CD4-positive, alpha-beta memory T cell (primary cell): ENCODE measurements at regions of chr3 and their contacts with region 1.

Region 1: DNA sequence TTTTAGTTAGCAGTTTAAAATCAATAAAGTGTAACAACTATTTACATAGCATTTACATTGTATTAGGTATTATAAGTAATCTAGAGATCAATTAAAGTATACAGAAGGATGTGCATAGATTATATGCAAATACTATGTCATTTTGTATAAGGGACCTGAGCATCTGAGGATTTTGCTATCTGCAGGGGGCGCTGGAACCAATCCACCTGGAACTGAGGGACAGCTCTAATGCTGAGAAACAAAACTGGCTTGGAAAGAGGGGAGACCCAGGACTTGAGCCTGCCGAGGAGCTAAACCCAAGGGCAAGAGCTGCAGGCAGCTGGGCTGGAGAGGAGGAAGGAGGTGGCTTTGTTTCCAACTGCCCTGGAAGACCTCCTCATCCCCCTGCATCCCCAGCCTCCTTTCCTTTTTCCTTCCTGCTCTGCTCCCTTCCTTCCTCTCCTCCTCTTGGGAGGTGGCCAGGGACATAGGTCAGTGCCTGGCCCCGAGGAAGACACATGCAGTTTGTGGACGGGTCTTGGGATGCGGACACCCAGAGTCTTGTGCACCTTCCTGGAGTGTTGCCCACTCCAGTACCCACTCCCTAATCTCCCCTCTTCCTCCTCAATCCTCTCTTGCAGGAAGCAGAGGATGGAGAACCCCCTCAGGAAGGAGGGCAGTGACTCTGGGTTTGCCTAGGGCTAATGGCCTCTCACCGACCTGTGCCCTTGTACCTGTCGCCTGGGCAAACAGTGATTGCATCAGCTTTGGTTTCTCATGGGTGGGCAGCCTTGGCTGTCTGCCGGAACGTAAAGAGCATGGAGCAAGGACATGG is 828 bp upstream of the RTP3 start:
- DNase-seq: peak in 4 of 5 donors; percentile 26 to 40 (median 30)
- H3K4me3 ChIP-seq: no peak overlapping the region
- H3K4me3 Mint-ChIP-seq: no peak overlapping the region
- H3K27ac ChIP-seq: no peak overlapping the region
- H3K27ac Mint-ChIP-seq: peak overlapping the region in 1 of 7 donors; percentile 84
- H3K4me1 ChIP-seq: peaks cover 10% of the 10 kb centered on the region
- H3K4me1 Mint-ChIP-seq: peaks cover 2 to 13% (median 5%) of the 10 kb centered on the region in 4 donors
- H3K27me3 ChIP-seq: no peaks in the 10 kb centered on the region
- H3K27me3 Mint-ChIP-seq: no peaks in the 10 kb centered on the region

Region 2: GRCh38 chr3:46508850-46509591 is 12.1 kb after region 1 on chr3:
- CTCF ChIA-PET with region 1: interaction called, 11 read pairs
- POLR2A ChIA-PET with region 1: no interaction called
- intact Hi-C with region 1: no loop called
- DNase-seq: no peak
- H3K4me3 ChIP-seq: no peak overlapping the region
- H3K4me3 Mint-ChIP-seq: no peak overlapping the region
- H3K27ac ChIP-seq: no peak overlapping the region
- H3K27ac Mint-ChIP-seq: no peak overlapping the region
- H3K4me1 ChIP-seq: no peaks in the 10 kb centered on the region
- H3K4me1 Mint-ChIP-seq: peaks cover 4 to 7% (median 6%) of the 10 kb centered on the region in 4 donors
- H3K27me3 ChIP-seq: no peaks in the 10 kb centered on the region
- H3K27me3 Mint-ChIP-seq: peaks cover 2 to 5% of the 10 kb centered on the region in 2 donors

Region 3: DNA sequence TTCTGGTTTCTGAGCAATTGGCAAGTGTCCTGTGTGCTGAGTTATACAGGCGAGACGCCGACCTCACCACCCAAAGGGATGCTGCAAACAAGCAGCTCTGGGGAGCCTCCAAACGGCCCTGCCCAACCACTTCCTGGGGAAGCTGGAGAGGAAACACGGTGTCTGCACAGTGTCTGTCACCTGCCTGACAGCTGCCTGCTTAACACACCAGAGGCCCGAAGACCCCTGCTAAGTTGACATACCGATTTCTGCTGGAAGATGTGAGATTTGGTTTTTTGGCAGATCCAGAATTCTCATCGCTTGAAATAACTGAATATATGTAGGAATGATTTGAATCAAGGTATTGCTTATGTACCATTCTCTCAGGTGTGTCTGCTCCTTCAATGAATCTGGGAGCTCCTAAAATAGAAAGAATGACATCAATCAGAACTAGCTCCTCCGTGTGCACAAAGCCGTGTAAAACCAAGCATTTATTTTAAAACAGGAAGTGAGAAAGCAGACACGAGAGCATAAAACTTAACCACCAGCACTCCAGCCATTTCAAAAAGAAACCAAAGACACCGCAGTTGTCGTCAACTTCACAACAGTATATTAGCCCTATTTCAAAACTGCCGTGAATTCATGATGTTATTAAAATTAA is 42.0 kb after region 1 on chr3:
- CTCF ChIA-PET with region 1: interaction called, 44 read pairs
- POLR2A ChIA-PET with region 1: interaction called, 11 read pairs
- intact Hi-C with region 1: no loop called
- DNase-seq: peak; percentile 83 to 95 (median 86)
- H3K4me3 ChIP-seq: peak overlapping the region; percentile 5 to 42
- H3K4me3 Mint-ChIP-seq: peak overlapping the region; percentile 65 to 85 (median 78)
- H3K27ac ChIP-seq: peak overlapping the region; percentile 51
- H3K27ac Mint-ChIP-seq: peak overlapping the region; percentile 88 to 97 (median 96)
- H3K4me1 ChIP-seq: peaks cover 52% of the 10 kb centered on the region
- H3K4me1 Mint-ChIP-seq: peaks cover 29 to 60% (median 46%) of the 10 kb centered on the region in 4 donors
- H3K27me3 ChIP-seq: no peaks in the 10 kb centered on the region
- H3K27me3 Mint-ChIP-seq: no peaks in the 10 kb centered on the region

Region 4: DNA sequence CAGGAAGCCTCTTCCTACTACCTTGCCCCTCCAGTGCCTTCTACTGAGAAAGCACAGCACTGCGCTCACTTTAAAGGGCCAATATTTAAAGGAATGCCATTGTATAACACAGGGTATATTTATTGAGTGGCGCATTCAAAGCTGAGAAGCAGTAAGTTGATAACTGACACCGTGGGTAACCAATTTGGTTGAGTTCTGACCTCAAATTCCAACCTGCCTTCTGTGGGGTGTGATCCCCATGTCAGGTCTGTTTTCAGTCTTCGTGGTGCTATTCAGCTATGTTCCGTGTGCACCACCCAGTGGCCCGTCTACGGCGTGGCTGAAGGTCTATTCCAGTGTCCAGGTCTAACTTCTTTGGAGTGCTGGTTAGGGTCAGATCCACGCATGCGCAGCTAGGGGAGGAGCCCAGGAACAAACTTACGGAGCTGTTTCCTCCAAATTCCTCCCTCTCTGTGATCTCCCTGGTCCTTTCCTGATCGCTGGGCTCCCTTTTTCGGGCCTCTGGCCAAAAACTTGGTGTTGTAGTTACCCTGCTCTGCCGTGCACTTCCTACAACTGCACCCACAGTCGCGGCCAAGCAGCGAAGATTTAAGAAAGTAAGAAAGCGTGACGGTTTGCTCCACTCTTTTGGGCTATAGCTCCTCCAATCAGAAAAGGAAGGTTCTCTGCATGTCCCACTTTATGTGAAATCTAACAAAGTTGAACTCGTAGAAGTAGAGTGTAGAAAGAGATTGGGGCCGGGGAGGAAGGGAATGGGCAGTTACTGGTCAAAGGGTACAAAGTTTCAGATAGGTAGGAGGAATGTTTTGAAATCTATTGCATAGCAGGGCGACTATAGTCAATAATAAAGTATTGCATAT is 61.5 kb after region 1 on chr3:
- CTCF ChIA-PET with region 1: interaction called, 331 read pairs
- POLR2A ChIA-PET with region 1: interaction called, 4 read pairs
- intact Hi-C with region 1: loop called (anchors 1 kb)
- DNase-seq: peak; percentile 68 to 74 (median 73)
- H3K4me3 ChIP-seq: peak overlapping the region in 1 of 2 donors; percentile 25
- H3K4me3 Mint-ChIP-seq: peak overlapping the region; percentile 76 to 87 (median 82)
- H3K27ac ChIP-seq: no peak overlapping the region
- H3K27ac Mint-ChIP-seq: peak overlapping the region in 6 of 7 donors; percentile 13 to 71 (median 36)
- H3K4me1 ChIP-seq: peaks cover 14% of the 10 kb centered on the region
- H3K4me1 Mint-ChIP-seq: peaks cover 10 to 17% (median 15%) of the 10 kb centered on the region in 4 donors
- H3K27me3 ChIP-seq: no peaks in the 10 kb centered on the region
- H3K27me3 Mint-ChIP-seq: peaks cover 1 to 4% of the 10 kb centered on the region in 2 donors

Region 5: DNA sequence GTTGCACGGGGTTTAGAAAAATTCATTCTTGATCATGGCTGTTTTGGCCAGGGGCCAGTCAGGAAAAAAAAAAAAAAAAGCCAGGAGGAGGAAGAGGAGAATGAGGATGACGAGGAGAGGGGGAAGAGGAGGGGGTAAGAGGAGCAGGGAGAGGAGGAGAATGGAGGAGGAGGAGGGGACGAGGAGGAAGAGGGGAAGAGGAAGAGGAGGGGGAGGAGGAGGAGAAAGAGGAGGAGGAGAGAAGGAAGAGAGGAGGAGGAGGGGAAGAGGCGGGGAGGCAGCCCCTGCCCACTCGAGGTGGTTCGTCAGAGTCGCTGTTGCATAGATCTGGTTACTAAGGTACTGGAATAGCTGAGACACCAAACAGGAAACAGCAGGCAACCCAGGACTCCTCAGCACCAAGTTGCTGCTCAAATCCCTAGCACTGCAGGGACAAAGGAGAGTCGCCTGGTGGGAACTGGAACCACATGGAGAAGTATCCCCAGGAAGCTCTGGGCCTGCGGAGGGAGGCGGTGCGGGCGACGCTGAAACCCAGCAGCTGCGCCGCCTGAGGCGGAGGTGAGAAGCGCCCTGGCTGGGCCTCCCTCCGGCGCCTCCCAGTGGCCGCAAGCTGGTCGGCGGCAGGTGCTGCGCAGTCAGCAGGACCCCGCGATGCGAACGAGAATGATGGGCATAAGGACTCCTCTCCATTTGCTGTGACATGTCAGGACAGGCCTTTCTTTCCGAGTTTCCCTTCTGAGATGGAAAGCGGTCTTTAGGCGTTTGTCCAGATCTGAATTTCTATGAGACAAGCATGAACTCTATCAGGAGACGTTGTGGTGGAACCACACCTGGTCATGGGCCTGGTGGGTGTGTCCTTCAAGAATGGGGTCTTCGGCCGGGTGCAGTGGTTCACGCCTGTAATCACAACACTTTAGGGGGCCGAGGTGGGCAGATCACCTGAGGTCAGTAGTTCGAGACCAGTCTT is 132.9 kb after region 1 on chr3:
- CTCF ChIA-PET with region 1: interaction called, 262 read pairs
- POLR2A ChIA-PET with region 1: interaction called, 3 read pairs
- intact Hi-C with region 1: no loop called
- DNase-seq: peak; percentile 66 to 77 (median 73)
- H3K4me3 ChIP-seq: peak overlapping the region in 1 of 2 donors; percentile 46
- H3K4me3 Mint-ChIP-seq: peak overlapping the region; percentile 51 to 80 (median 72)
- H3K27ac ChIP-seq: no peak overlapping the region
- H3K27ac Mint-ChIP-seq: peak overlapping the region in 6 of 7 donors; percentile 29 to 95 (median 72)
- H3K4me1 ChIP-seq: peaks cover 9% of the 10 kb centered on the region
- H3K4me1 Mint-ChIP-seq: peaks cover 7 to 25% (median 16%) of the 10 kb centered on the region in 4 donors
- H3K27me3 ChIP-seq: no peaks in the 10 kb centered on the region
- H3K27me3 Mint-ChIP-seq: peaks cover 2 to 3% of the 10 kb centered on the region in 2 donors